ENCODE measurements at regions of chr21 and their contacts with region 1.

Region 1: GRCh38 chr21:39715804-39716397 is 29.1 kb upstream of the IGSF5 start:
- DNase-seq: no peak
- H3K4me3 ChIP-seq: no peak overlapping the region
- H3K27ac ChIP-seq: no peak overlapping the region
- H3K4me1 ChIP-seq: no peaks in the 10 kb centered on the region
- H3K27me3 ChIP-seq: peaks cover 0 to 24% (median 0%) of the 10 kb centered on the region in 7 donors
- CTCF ChIP-seq: peak in 9 of 11 experiments; percentile 8 to 66 (median 60)
- POLR2A ChIP-seq: no peak

Region 2: DNA sequence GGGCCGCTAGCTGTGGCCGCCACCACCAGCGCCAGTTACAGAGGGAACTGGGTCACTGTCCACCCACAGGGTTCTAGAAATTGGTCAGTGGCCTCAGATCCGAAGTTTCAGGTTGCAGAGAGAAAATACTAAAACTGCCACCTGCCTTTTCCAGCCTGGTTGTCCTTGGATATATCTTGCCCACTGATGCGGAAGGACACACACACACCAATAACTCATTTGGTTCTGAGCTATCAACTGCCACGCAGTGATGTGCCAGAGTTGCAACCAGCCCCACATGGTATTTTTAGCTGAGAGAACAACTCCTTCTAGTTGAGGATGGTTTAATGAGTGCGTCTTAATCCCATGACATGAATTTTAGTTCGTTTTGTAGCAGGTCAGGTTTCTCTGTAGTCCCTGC is 196.1 kb before region 1 on chr21:
- intact Hi-C with region 1: loop called (anchors 2 kb)
- DNase-seq: no peak
- H3K4me3 ChIP-seq: no peak overlapping the region
- H3K27ac ChIP-seq: no peak overlapping the region
- H3K4me1 ChIP-seq: peaks cover 0 to 4% (median 0%) of the 10 kb centered on the region in 6 donors
- H3K27me3 ChIP-seq: no peaks in the 10 kb centered on the region
- CTCF ChIP-seq: no peak
- POLR2A ChIP-seq: no peak

Region 3: DNA sequence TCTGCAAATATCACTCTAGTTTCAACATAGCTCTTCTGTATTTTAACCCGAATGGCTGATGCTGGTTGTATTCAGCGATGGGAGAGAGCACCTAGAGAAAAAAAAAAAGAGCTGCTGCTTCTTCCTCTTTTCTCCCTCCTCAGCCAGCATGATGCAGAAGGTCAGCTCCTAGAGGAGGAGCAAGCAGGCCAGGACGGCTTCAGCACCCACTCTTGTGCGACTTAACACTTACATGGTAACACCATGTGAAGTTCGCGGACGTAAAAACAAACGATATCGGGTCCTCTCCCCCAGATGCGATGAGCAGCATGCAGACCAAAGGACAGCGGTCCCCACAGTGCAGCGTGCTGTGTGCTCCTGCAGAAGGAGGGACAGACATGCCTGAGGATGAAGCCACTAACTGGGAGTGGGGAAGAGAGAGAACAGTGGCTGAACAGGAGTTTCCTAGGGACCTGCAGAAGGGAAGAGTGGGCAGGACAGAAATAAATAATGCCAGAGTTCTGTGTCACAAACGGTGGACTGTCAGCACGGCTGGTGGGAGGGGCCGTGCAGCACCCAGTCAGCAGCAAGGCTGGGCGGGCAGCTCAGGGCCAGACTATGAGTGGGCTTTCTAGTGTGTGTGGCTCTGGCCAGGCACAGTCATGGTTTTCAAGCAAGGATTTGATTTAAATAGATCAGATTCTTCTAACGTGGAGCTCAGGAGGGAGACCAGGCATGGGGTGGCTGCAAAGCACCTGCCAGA is 114.5 kb before region 1 on chr21:
- intact Hi-C with region 1: no loop called
- DNase-seq: no peak
- H3K4me3 ChIP-seq: no peak overlapping the region
- H3K27ac ChIP-seq: no peak overlapping the region
- H3K4me1 ChIP-seq: no peaks in the 10 kb centered on the region
- H3K27me3 ChIP-seq: peaks cover 0 to 6% (median 0%) of the 10 kb centered on the region in 7 donors
- CTCF ChIP-seq: no peak
- POLR2A ChIP-seq: no peak